Colonic mucosa (tissue), 4 donors: ENCODE measurements at regions of chr3 and their contacts with region 1.

Region 1: GRCh38 chr3:113912552-113913236 is 35.1 kb upstream of the ZDHHC23 start:
- DNase-seq: peak; percentile 47
- H3K4me3 ChIP-seq: no peak overlapping the region
- H3K27ac ChIP-seq: no peak overlapping the region
- H3K4me1 ChIP-seq: no peaks in the 10 kb centered on the region
- H3K27me3 ChIP-seq: no peaks in the 10 kb centered on the region
- CTCF ChIP-seq: peak; percentile 46

Region 2: DNA sequence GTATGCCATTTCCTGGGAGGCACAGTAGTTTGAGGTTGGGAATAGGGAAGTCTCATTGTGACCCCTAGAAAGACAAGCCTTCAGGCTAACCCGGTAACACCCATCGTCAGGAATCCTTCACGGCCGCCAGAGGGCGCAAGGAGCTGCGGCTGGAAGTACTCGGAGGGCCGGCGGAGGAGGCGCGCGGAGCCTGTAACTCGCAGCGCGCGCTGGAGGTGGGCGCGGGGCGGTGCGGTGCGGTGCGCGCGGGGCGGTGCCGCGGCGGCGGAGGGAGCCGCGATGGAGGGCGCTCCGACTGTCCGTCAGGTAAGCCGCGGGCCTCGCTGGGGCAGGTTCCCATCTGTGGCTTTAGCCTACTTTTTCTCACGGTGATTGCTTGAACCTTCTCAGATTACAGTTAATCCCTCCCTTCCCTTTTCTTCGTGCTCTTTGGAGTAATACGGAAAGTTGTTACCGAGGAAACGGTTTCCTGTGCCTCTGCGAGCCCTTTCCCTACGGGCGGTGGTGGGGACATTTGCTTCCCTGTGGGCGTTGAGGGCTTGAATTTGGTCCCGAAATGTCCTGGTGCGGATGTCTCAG is 74.0 kb before region 1 on chr3 and contains the start of gene GRAMD1C:
- intact Hi-C with region 1: loop called (anchors 2 kb)
- DNase-seq: peak; percentile 85
- H3K4me3 ChIP-seq: peak within 1 kb of the TSS; percentile 49
- H3K27ac ChIP-seq: no peak within 1 kb of the TSS
- H3K4me1 ChIP-seq: no peaks in the 10 kb centered on the region
- H3K27me3 ChIP-seq: no peaks in the 10 kb centered on the region
- CTCF ChIP-seq: peak; percentile 86
- total RNA-seq, gene GRAMD1C: 4.1 to 10.2 TPM